Head of caudate nucleus (tissue), 42 donors: ENCODE measurements at regions of chr4 and their contacts with region 1.

Region 1: DNA sequence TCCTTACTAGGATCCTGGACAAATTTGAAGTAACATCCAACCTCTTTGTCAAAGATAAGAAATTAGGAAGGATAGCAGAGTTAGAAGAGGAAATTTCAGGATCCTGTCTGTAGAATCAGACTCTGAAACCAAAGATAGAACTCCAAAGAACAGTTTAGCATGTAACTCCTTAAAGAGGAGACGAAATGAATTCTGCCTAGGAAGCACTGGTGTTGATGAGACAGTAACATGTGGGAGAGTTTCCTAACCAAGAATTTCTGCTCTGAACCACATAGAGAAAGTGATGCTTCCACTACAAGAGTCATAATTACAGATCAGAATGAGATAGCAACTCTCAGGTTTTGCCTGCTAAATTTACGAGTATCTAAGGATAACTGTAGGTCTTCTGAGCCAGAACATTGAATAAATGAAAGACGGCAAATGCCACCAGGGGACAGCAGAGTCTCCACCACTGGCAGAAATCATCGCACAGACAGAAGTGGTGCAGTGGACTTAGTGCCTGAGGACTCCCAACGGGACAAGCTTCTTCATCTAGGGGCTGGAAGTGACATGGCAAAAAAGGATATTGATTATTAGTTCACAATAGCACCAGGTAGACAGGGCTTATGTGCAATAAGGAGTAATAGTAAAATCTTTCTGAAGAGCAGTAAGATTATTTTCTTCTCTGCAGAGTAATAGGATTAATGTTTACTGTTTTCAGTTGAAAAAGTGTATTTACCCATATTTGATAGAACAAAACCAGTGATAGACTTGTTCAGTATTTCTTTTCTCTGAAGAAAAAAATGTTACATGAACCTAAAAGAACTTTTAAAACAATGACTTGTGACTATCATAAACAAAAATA is 6.7 kb upstream of the PPID start:
- DNase-seq: peak; percentile 38 to 89 (median 76)

Region 2: GRCh38 chr4:158102903-158103473 is 627.0 kb before region 1 on chr4:
- intact Hi-C with region 1: no loop called
- DNase-seq: no peak

Region 3: DNA sequence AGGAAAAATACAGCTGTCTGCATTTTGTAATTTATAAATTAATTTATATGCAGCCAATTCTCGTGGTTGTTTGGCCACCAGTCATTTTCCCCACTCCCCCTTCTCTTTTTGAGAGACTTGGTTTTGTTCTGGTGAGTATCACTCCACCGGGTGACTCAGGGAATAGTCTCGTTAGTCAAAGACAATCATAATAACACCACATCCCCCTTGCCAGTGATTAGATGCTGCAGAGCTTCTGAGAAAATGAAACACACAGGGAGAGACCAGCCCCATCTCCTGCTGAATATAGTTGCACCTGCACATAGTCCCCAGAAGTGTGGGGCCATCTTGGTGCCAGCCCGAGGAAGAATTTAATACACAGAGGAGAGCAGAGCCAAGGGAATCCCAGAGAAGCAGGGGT is 30.9 kb after region 1 on chr4:
- intact Hi-C with region 1: loop called (anchors 5 kb)
- DNase-seq: peak in 1 of 42 donors; percentile 2

Region 4: DNA sequence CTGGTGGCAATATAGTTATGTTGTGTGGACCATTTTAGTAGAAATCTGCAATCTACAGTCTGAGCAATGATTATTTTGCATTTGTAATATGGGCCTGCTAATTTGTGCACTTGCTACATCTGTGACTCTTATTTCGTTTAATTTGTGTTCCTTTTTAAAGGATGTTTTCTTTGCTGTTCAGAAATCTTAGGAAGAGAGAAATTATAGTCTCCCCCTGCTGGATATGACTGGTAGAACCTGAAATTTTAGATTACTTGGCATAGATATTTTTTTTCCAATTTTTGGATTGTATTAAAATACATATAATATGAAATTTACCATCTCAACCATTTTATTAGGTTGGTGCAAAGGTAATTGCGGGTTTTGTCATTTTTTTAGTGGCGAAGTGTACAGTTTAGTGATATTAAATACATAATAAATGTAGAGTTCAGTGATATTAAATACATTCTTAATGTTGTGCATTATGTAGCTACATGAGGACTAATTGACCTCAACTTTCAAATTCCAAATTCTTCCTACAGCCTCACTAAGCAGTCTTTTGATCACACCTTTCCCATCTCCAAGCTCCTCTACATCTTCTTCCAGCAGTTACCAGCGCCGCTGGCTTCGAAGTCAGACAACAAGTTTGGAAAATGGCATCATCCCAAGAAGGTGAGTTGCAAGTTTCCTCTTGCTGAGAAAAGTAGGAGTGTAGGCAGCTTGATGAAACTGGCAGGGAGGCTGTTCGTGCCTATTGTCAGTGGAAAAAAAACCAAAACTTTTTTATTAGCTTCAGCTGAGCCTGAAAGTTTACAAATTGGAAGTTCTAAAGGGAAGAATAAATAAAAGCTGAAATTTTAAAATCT is 121.1 kb after region 1 on chr4:
- intact Hi-C with region 1: loop called (anchors 5 kb)
- DNase-seq: peak in 1 of 42 donors; percentile 37

Region 5: DNA sequence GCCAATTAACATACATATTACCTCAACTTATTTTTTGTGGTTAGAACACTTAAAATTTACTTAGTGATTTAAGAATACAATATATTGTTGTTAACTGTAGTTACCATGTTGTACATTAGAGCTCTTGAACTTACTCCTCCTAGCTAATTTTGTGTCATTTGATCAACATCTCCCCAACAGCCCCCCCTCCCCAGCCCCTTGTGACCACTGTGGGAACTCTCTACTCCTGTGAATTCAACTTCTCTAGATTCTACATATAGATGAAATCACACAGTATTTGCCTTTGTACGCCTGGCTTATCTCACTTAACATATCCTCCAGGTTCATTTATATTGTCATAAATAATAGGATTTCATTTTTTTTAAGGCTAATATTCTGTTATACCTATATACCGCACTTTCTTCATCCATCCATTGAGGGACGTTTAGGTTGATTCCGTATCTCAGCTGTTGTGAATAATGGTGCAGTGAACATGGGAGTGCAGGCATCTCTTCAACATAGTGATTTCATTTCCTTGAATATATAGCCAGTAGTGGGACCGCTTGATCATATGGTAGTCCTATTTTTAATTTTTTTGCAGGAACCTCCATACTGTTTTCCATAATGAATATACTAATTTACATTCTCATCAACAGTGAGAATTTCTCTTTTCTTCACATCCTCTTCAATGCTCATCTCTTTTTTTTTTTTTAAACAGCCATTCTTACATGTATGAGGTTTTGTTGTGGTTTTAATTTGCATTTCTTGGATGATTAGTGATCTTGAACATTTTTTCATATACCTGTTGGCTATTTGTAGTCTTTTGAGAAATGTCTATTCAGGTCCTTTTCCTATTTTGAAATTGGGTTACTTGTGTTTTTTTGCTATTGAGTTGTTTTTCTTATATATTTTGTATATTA is 439.7 kb after region 1 on chr4:
- intact Hi-C with region 1: loop called (anchors 5 kb)
- DNase-seq: no peak